ENCODE measurements at regions of chr3 and their contacts with region 1.

Region 1: DNA sequence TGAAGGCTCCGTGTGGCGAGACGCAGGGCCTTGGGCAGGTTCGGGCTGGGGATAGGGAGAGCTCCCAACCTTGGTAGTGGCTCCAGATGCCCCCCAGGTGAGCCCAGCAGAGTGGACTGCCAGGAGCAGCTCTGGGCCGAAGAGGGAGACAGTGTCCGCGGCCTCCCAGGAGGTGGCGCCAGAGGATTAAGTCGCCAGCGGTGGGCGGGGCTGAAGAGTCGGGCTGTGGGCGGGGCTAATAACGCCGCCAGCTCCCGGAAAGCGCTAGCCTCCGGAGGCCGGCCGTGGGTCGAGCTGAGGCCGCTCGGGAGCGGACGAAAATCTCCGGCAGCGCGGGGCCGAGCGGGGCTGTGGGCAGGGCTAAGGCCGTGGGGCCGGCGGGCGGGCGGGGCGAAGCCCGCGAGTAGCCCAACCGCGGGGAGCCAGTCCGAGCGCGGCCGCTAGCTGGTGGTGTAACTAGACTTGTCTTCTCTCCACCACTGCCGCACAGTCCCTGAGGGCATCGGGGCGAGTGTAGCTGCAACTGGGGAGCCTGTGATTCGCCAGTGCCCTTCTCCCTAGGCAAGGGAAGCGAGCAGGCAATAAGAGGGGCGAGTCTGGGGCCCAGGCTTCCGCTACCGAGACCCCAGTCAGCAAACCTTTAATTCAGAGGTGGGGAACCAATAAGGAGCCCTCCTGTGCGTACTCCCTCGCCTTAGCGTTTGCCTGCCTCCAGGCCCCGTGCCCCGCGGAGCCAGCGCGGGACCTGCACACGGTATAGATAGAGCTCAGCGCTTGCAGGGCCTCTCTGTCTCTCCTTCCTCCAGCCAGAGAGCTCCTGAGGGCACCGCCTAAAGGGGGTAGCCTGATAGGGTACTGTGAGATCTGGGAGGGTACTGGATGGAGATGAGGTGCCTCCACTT is 14.4 kb upstream of the BSN start:
- DNase-seq: peak; percentile 88 to 96 (median 92)
- H3K4me3 ChIP-seq: peak overlapping the region; percentile 37 to 74 (median 64)
- H3K27ac ChIP-seq: peak overlapping the region; percentile 19 to 96 (median 84)
- H3K27me3 ChIP-seq: peaks cover 0 to 4% (median 0%) of the 10 kb centered on the region in 45 donors
- CTCF ChIP-seq: peak; percentile 84 to 98 (median 94)

Region 2: DNA sequence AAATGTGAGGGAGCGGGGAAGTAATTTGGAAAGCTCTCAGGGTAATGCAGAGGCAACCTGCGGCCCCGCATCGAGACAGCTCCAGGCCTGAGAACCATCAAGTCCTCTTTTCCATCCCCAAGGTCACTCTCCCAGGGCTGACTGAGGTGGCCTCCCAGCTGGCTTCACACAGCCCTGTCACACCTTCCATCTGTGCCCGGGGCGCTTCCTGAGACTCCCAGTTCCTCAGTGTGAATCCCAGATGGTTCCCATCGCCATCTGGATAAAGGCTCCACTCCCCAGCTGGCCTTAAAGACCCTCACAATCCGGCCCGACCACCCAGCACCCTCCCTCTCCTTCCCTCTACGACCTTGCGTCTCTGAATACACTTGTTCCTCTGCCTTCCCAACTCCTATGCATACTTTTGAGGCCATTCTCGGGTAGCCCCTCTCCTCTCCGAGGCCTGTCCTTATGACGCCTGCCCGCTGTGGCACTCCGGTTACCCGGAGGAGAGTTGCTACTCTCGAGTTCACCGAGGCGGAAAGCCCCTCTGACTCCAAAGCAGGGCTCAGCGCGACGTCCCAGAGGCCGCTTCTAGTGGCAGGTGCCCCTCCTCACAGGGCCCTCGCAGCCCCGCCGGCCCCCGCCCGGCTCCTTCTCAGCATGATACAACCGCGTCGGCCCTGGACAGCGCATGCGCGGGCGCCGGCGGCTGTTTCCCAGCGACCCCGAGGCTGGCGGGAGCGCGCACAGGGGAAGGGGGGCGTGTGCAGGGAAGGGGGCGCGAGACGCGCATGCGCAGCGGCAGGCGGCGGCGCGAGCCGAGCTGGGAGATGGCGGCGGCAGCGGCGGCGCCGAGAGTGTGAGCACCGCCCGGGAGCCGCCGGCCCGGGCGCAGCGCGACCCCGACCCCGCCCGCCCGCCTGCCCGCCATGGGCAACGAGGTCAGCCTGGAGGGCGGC is 14.1 kb after region 1 on chr3 and contains the start of gene BSN:
- intact Hi-C with region 1: loop called in 1 of 2 experiments (anchors 2 kb)
- DNase-seq: peak; percentile 82 to 92 (median 88)
- H3K4me3 ChIP-seq: peak within 1 kb of the TSS; percentile 66 to 95 (median 86)
- H3K27ac ChIP-seq: peak within 1 kb of the TSS in 58 of 59 donors; percentile 49 to 98 (median 86)
- H3K27me3 ChIP-seq: no peaks in the 10 kb centered on the region
- CTCF ChIP-seq: peak in 23 of 56 donors; percentile 9 to 40 (median 26)
- total RNA-seq, gene BSN: 47.8 to 218 (median 156) TPM

Region 3: DNA sequence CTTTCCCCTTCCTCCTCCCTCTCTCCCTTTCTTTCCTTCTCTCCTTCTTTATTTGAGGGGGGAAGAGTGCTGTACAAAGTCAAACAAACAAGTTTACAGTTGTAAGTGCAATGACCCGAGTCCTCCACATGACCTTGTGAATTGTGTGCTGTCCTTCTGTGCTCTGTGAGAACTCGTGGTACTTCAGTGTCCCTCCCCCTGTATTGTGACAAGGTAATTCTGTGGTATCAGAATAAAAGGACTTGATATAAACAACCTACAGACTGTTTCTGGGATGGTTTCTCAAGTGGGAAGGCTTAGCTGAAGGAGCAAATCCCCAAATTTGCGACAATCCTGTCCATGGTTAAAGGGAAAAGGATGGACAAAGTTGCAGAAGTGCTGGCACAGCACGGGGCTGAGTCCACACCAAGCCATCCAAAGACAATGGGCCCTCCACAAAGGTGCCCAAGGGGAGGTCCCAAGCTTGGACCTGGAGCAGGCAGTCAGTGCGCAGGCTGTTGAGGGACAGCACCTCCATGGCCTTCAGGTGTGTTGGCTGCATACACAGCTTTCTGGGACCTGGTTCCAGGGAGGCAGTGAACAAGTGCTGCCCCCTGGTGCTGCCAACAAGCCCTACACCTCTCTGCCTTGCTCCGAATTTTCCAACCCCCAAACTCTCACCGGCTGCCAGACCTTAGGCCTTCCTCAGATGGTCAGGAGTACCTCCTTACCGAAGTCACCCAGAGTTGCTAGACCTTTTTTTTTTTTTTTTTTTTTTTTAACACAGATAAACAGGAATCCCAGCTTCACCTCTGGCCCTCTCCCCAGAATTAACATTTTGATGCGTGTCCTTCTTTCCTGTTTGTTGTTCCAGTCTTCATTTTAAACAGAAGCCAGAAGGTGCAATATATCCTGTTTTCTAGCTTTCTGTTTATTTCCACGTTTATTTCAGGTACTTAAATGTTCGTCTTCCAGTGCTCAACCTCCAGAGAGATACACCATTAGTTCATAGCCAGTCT is 131.7 kb after region 1 on chr3:
- intact Hi-C with region 1: loop called (anchors 1 kb)
- DNase-seq: peak in 9 of 10 donors; percentile 50 to 86 (median 73)
- H3K4me3 ChIP-seq: peak overlapping the region in 1 of 59 donors; percentile 6
- H3K27ac ChIP-seq: peak overlapping the region in 9 of 59 donors; percentile 10 to 75 (median 28)
- H3K27me3 ChIP-seq: no peaks in the 10 kb centered on the region
- CTCF ChIP-seq: peak; percentile 64 to 87 (median 82)

Region 4: GRCh38 chr3:49839193-49839809 is 299.4 kb after region 1 on chr3:
- intact Hi-C with region 1: loop called in 1 of 2 experiments (anchors 5 kb)
- DNase-seq: peak; percentile 68 to 86 (median 81)
- H3K4me3 ChIP-seq: peak overlapping the region in 5 of 59 donors; percentile 9 to 22 (median 17)
- H3K27ac ChIP-seq: peak overlapping the region in 19 of 59 donors; percentile 8 to 81 (median 51)
- H3K27me3 ChIP-seq: no peaks in the 10 kb centered on the region
- CTCF ChIP-seq: peak; percentile 71 to 97 (median 89)

Region 5: DNA sequence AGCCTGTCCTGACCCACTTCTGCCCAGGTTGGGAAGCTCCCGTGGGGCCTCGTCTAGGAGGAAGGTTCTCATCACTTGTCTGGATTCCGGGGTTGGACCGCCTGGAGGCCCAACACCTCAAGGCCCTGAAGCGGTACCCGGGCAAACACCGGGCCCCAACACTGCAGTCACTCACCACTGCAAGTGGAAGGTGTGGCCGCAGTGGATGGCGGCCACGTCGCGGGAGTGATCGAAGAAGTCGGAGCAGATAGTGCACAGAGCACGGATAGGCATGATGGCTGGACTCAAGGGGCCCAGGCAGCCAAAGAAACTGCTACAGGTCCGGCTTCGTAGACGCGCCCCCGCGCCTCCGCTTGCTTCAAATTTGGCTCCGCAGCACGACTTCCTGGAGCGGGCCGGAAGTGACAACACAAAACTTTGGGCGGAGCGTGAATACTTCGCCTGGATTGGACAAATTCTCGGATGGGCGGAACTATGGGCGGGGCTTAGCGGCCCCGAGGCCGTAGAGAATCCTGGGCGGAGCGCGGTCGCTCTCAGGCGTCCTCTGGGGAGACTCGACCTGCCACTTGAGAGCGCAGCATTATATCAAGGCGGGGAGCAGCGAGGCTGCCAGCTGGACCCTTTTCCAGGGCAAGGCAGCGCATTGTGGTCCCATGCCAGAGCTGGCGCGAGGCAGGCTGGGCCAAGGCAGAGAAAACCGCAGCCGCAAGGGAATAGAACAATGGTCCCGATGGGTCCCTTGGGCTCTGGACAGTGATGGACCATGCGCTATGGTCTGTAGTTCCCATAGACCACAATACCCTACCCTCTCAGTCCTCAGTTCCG is 316.5 kb after region 1 on chr3 and contains the start of gene TRAIP:
- intact Hi-C with region 1: loop called in 1 of 2 experiments (anchors 5 kb)
- DNase-seq: peak; percentile 85 to 95 (median 93)
- H3K4me3 ChIP-seq: peak within 1 kb of the TSS; percentile 47 to 98 (median 73)
- H3K27ac ChIP-seq: peak within 1 kb of the TSS in 52 of 59 donors; percentile 41 to 92 (median 77)
- H3K27me3 ChIP-seq: no peaks in the 10 kb centered on the region
- CTCF ChIP-seq: peak in 27 of 56 donors; percentile 2 to 59 (median 25)
- total RNA-seq, gene TRAIP: 0.38 to 9.2 (median 3.0) TPM

Measured in dorsolateral prefrontal cortex (tissue), 120 donors.